Posterior cingulate gyrus (tissue), 11 donors: ENCODE measurements at regions of chr7 and their contacts with region 1.

Region 1: DNA sequence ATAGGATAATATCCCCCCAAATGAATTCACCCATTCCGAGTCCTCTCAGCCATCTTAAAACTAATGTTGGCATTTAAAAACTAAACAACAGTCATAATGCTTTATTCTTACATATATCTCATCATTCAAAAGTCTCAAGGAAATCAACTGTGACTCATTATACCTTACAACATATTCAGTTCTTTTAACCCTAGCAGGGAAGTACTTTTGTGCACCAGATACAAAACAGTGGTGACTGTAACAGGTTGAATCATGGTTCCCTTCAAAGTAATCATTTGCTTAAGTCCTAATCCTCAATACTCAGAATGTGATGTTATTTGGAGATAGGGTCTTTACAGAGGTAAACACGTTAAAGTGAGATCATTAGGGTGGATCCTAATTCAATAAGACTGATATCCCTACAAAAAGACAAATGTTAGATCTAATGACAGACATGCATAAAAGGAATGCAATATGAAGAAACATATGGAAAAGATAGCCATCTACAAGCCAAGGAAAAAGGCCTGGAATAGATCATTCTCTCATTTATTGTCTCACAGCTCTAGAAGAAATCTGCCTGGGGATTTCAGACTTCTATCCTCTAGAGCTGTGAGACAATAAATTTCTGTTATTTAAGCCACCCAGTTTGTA is 42.3 kb downstream of the RELN start:
- DNase-seq: no peak

Region 2: DNA sequence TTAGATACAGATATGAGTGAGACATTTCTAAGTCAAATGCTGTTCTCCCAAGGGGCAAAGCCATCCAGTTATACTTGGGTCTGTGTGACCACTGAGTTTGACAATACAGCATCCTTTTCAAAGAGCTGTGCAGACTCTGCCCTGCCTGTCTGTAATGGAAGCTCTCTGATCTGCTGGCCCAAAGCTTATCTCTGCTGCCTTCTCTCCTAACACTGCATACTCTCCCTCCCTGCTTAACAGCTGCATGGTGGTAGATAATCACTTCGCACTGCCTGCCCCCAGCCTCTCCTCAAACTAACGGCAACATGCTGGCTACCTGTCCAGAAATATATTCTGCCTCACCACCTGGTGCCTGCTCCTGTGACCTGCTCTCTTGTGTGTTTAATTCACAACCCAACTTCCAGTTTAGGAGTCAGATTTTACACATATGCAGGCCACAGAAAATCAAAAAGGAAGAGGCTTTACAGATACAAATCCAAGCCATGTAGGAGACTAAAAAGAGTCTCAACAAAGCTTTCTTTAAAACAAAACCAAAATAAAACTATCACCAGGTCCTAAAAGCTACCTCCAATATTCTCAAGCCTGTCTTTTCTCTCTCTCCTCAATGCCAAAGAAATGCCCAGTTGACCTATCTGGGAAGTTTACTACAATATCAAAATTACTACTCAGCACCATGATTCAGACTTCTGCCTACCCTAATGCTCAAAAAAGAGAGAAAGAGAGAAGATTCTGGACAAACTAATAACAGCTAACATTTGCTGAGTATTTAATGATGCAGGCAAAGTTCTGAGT is 103.3 kb before region 1 on chr7:
- intact Hi-C with region 1: no loop called
- DNase-seq: no peak

Region 3: GRCh38 chr7:104017001-104017400 is 69.9 kb after region 1 on chr7:
- intact Hi-C with region 1: loop called (anchors 10 kb)
- DNase-seq: no peak

Region 4: DNA sequence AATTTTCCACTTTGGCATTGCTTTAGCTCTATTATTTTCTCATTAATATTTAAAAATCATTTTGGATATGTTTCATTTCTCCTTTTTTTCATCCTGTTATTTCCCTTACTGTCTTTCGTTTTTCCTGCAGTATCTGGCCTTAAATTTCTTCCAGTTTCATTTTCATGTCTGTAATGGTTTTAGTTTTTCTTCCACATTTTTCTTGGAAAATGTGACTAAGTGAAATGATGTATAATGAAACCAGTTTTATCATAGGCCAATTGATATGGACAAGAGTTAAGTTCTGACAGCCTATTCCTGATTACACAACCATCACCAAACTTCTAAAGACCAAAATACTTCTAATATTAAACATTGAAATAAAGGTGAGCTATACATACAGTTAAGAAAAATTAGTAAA is 539.8 kb after region 1 on chr7:
- intact Hi-C with region 1: no loop called
- DNase-seq: no peak